Sciatic nerve (tissue), 2 donors: ENCODE measurements at regions of chr2 and their contacts with region 1.

Region 1: GRCh38 chr2:200156166-200156835 is 150.2 kb upstream of the SPATS2L start:
- DNase-seq: no peak
- ATAC-seq: peak; percentile 95

Region 2: GRCh38 chr2:199278099-199278498 is 878.2 kb before region 1 on chr2:
- intact Hi-C with region 1: no loop called
- DNase-seq: no peak
- ATAC-seq: no peak

Region 3: GRCh38 chr2:199443589-199444130 is 712.6 kb before region 1 on chr2:
- intact Hi-C with region 1: loop called (anchors 10 kb)
- DNase-seq: no peak
- ATAC-seq: no peak

Region 4: GRCh38 chr2:199635951-199636350 is 520.4 kb before region 1 on chr2:
- intact Hi-C with region 1: loop called (anchors 5 kb)
- DNase-seq: no peak
- ATAC-seq: no peak

Region 5: DNA sequence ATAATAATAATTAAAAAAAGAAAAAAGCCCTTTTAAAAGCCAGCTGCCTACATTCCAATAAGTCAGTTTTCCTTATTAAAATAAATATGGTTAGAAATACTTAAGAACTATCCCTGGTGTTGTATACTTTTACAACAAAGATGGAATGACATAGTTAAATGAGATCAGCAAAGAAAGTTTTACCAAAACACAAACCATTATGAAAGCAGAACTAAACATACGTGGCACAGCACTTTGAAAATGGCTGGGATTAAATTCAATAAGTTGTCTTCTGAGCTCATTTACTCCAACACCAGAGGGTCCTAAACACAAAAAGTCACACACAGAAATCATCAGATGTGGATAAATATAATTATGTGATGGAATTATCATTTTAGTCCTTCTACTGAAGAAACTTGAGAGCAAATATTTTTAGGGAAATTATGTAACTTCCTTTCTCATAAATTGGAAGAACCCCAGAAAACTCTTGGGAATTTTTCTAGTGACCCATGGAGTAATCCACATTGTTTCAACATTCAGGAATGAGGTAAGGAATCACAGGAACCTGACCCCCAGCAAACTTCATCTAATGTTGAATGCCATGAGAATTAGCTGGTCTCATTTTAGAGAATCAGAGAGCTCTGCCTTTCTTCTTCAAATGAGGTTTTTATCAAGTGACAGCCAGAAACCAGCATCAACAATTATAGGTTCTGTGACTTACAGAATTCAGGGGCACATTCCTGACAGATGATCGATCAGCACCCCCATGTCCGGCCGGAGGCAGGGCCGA is 1498.5 kb after region 1 on chr2:
- intact Hi-C with region 1: no loop called
- DNase-seq: no peak
- ATAC-seq: peak; percentile 71